Caco-2 (cell line): ENCODE measurements at regions of chr14 and their contacts with region 1.

Region 1: DNA sequence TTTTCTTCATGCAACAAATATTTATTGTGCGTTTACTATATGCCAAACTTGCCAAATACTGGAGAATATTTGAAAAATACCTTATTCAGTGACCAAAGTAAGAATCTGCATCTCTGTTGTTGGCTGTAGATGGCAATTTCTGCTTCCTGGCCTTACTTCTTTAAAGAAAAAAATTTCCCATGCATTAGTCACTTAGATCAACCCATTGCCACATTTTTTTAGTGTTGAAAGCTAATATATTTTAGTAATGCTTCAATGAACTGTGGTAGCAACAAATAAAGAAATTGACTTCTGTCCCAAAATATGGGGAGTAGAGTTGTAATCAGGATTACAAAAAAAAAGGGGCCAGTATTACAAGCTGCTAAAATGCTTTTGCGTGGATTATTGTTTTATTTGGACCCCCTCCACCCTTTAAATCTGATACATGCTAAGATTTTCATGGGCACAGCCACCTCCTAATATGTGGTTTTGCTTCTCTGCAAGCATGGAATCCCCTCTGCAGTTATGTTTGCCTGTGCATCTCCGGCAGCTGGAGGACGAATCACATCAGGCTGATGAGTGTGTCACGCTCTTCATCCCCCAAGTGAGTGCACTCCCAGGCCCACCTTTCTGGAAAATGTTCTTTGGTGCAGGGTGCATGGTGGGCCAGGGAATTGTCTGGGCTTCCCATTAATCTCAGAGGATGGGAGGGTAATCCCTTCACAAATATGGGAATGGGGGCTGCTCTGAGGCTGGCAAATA is 38.1 kb upstream of the PTCSC3 start:
- DNase-seq: peak in 1 of 2 experiments; percentile 41
- H3K4me3 ChIP-seq: no peak overlapping the region
- H3K4me3 Mint-ChIP-seq: peak overlapping the region; percentile 53
- H3K27ac Mint-ChIP-seq: peak overlapping the region; percentile 23
- H3K4me1 ChIP-seq: peaks cover 39% of the 10 kb centered on the region
- H3K4me1 Mint-ChIP-seq: peaks cover 28% of the 10 kb centered on the region
- H3K27me3 ChIP-seq: no peaks in the 10 kb centered on the region; the same call in 1 of the 2 replicates
- H3K27me3 Mint-ChIP-seq: no peaks in the 10 kb centered on the region
- CTCF ChIP-seq: no peak

Region 2: GRCh38 chr14:36204461-36205073 is 10.1 kb before region 1 on chr14:
- CTCF ChIA-PET with region 1: no interaction called
- POLR2A ChIA-PET with region 1: no interaction called
- intact Hi-C with region 1: no loop called
- DNase-seq: no peak
- H3K4me3 ChIP-seq: no peak overlapping the region
- H3K4me3 Mint-ChIP-seq: no peak overlapping the region
- H3K27ac Mint-ChIP-seq: no peak overlapping the region
- H3K4me1 ChIP-seq: peaks cover 26% of the 10 kb centered on the region
- H3K4me1 Mint-ChIP-seq: peaks cover 17% of the 10 kb centered on the region
- H3K27me3 ChIP-seq: no peaks in the 10 kb centered on the region
- H3K27me3 Mint-ChIP-seq: peaks cover 7% of the 10 kb centered on the region
- CTCF ChIP-seq: no peak

Region 3: DNA sequence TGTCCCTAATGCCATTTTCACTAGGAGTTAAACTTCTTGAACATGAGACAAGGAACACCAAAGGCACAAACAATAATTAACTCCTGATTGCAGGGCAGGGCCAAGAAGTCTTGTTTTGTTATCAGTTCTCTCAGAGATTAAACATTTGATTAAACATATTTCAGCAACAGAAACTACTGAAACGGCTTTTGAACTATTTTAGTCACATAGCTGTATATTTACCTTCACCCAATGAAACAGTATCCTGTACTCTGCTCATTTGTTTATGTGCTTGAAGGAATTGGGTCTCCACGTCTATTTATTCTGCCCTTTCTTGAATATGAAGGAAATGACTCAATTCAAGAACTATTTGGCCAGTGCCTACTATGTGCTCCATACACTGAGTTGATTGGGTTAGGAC is 13.2 kb after region 1 on chr14:
- CTCF ChIA-PET with region 1: no interaction called
- POLR2A ChIA-PET with region 1: no interaction called
- intact Hi-C with region 1: loop called (anchors 1 kb)
- DNase-seq: peak; percentile 10 to 46
- H3K4me3 ChIP-seq: no peak overlapping the region
- H3K4me3 Mint-ChIP-seq: no peak overlapping the region
- H3K27ac Mint-ChIP-seq: peak overlapping the region; percentile 64
- H3K4me1 ChIP-seq: peaks cover 22% of the 10 kb centered on the region
- H3K4me1 Mint-ChIP-seq: peaks cover 12% of the 10 kb centered on the region
- H3K27me3 ChIP-seq: no peaks in the 10 kb centered on the region; the same call in 1 of the 2 replicates
- H3K27me3 Mint-ChIP-seq: no peaks in the 10 kb centered on the region
- CTCF ChIP-seq: no peak

Region 4: GRCh38 chr14:36256126-36256801 is 41.6 kb after region 1 on chr14:
- CTCF ChIA-PET with region 1: no interaction called
- POLR2A ChIA-PET with region 1: no interaction called
- intact Hi-C with region 1: no loop called
- DNase-seq: no peak
- H3K4me3 ChIP-seq: no peak overlapping the region
- H3K4me3 Mint-ChIP-seq: no peak overlapping the region
- H3K27ac Mint-ChIP-seq: no peak overlapping the region
- H3K4me1 ChIP-seq: no peaks in the 10 kb centered on the region
- H3K4me1 Mint-ChIP-seq: peaks cover 10% of the 10 kb centered on the region
- H3K27me3 ChIP-seq: no peaks in the 10 kb centered on the region
- H3K27me3 Mint-ChIP-seq: no peaks in the 10 kb centered on the region
- CTCF ChIP-seq: no peak